ENCODE measurements at regions of chr20 and their contacts with region 1.

Region 1: GRCh38 chr20:53652090-53652858 is 58.6 kb upstream of the ZNF217 start:
- DNase-seq: no peak
- H3K4me3 Mint-ChIP-seq: peak overlapping the region; percentile 75
- H3K27ac Mint-ChIP-seq: peak overlapping the region; percentile 99
- H3K4me1 Mint-ChIP-seq: peaks cover 39% of the 10 kb centered on the region
- H3K27me3 Mint-ChIP-seq: no peaks in the 10 kb centered on the region

Region 2: GRCh38 chr20:53691060-53691810 is 39.0 kb after region 1 on chr20:
- intact Hi-C with region 1: loop called (anchors 1 kb)
- DNase-seq: no peak
- H3K4me3 Mint-ChIP-seq: no peak overlapping the region
- H3K27ac Mint-ChIP-seq: peak overlapping the region; percentile 0
- H3K4me1 Mint-ChIP-seq: peaks cover 35% of the 10 kb centered on the region
- H3K27me3 Mint-ChIP-seq: no peaks in the 10 kb centered on the region

Region 3: DNA sequence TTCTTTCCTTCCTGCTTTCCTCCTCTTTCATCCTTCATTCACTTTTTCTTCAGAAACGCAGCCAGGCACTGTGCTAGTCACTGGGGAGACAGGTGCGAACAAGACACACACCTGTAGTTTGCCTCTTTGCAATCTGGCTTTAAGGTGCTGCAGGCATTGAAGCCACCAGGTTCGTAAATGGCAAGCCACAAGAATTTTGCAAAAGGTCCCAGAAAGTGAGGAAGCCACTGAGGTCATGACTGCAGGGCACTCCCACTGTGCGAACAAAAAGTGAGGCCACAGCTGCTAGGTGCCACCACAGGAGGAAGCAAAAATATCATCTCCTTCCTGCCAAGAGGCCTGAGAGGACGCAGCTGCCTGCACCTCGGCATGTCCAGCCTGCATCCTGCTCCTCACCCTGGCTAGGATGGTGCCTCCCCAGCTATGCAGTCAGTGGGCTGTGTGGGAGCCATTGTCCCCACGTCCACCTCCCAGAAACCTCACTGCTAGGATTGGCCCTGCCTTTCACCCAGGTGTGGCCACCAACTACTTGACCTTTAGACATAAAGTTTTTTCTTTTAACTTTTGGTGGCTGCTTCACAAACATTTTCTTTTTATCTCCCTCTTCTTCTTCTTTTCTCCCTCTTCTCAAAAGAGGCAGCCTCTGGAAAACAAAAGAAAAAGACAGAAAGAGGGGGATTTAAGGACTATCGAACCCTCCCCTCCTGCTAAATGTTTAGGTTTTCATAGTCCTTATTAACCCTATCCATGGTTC is 187.3 kb after region 1 on chr20:
- intact Hi-C with region 1: loop called (anchors 10 kb)
- DNase-seq: peak; percentile 64
- H3K4me3 Mint-ChIP-seq: peak overlapping the region; percentile 73
- H3K27ac Mint-ChIP-seq: peak overlapping the region; percentile 84
- H3K4me1 Mint-ChIP-seq: peaks cover 62% of the 10 kb centered on the region
- H3K27me3 Mint-ChIP-seq: no peaks in the 10 kb centered on the region

Measured in activated T-helper 2 cell treated with anti-CD3 and anti-CD28 coated beads, Interferon-gamma antibody, Interleukin-2, Interleukin-4, amounts not matched to agents 10 μg/mL and 5 μg/mL and 100 μg/mL, durations not matched to agents 14 hours and 24 hours and 36 hours (primary cell).